Astrocyte of the cerebellum (primary cell): ENCODE measurements at regions of chr16 and their contacts with region 1.

Region 1: DNA sequence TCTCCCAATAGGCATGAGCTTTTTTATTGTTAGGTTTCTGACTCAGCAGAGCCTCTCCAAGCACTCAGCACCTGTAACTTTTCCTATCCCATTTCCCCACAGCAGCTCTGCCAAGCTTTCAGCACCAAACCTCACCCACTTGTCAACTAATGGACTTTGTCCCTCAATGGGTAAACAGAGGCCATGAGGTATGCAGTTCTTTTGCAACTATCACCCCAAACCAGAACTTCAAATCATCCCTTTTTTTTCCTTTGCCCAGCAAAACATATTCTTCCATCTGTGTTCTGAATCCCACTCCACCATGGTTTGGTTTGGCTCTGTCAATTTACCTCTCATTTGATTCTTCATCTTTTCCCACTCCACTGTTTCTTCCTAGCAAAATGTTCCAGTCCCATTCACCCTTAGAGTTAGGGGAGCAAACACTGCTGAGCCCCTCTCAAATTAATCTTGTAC is 58.1 kb downstream of the TOX3 start:
- DNase-seq: no peak
- H3K4me3 ChIP-seq: no peak overlapping the region
- CTCF ChIP-seq: no peak

Region 2: GRCh38 chr16:52389045-52389444 is 99.8 kb before region 1 on chr16:
- in situ Hi-C with region 1: no loop called
- DNase-seq: no peak
- H3K4me3 ChIP-seq: no peak overlapping the region
- CTCF ChIP-seq: no peak

Region 3: DNA sequence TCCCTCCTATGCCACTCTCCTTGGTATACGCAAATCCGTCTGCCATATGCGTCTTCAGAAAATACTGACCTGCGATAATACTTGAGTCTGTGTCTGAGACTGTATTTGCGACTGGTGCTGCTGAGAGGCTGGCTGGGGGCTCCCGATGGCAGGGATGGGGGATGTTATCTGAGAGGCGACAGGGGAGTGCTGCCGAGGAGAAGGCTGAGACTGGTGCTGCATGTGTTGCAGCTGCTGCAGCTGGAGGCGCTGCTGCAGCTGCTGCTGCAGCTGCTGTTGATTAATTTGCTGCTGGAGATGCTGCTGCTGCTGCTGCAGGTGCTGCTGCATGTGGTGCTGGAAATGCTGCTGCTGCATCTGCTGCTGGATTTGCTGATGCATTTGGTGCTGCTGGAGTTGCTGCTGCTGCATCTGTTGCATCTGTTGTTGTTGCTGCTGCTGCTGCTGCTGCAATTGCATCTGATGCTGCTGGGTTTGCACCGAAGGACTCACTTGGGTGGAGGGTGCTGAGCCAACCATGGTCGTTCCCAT is 49.6 kb before region 1 on chr16:
- in situ Hi-C with region 1: loop called (anchors 5 kb)
- DNase-seq: no peak
- H3K4me3 ChIP-seq: no peak overlapping the region
- CTCF ChIP-seq: no peak

Region 4: GRCh38 chr16:52578007-52578828 is 89.4 kb after region 1 on chr16:
- in situ Hi-C with region 1: loop called (anchors 5 kb)
- DNase-seq: no peak
- H3K4me3 ChIP-seq: no peak overlapping the region
- CTCF ChIP-seq: no peak